WTC11 (cell line): ENCODE measurements at regions of chr22 and their contacts with region 1.

Region 1: DNA sequence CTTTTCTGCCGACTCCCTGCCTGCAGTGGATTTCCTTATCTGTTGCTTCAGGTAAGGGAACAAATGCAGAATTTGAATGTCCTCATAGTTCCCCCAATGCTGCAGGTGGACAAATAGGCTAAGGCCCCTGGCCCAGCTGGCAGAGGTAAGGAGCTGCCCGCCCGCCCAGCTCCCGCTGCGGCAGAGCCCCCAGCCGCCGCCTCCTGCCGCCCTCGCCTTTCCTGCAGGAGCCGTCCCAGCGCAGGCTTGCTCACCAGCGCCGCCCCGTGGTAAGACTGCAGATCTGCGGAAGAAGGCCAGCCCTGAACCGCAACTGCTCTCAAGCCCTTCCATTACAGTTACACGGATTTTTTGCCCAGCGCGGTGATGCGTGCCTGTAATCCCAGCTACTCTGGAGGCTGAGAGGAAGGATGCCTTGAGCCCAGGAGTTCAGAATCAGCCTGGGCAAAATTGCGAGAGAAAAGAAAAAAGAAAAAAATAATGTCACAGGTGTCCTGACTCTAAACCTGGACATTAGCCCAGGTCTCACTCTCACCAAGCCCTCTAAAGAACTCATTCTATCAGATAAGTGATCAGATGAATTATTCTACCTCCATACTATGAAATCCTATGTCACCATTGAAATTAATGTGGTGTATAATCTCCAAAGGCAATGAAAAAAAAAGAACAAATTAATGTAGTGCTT is 51.2 kb upstream of the EMID1 start:
- DNase-seq: peak; percentile 89
- ATAC-seq: peak; percentile 58
- H3K4me3 Mint-ChIP-seq: no peak overlapping the region
- H3K27ac Mint-ChIP-seq: no peak overlapping the region
- H3K4me1 Mint-ChIP-seq: peaks cover 49% of the 10 kb centered on the region
- H3K27me3 Mint-ChIP-seq: 0 out of 2 replicates have a peak, but pooled peaks cover 2% of the 10 kb centered on the region
- CTCF ChIP-seq: peak; percentile 97

Region 2: DNA sequence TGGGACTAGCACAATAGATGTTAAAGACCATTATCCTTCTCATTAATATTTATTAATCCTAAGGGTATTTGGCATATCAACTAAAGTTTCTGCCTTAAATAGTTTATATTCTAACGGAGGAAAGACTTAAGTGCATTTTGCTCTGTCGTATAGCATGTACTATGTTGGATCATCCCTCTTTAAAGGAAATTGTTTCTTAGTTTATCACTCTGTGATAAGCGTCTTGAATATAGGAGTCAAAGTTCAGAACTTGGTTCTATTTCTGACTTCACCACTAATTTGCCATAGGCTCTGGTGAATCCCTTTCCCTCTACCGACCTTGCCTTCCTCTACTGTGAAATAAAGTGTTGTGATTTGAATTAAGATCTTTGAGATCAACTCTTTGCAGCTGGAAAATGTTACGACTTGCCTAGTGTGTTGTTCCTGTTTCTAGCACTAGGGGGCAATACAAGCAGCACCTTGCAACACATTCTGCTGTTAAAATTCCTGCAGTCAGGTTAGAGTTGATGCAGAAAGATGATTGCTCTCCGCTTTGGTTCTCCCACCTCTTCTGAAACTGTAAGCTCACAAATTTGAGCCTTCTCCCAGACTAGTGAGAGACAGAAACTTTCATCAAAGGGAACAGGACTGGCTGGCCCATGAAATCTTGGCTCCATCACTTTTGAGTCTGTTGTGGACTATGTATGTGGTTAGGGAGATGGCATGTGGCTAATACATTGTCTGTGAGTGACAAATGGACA is 299.0 kb before region 1 on chr22:
- CTCF ChIA-PET with region 1: interaction called, 10 read pairs
- POLR2A ChIA-PET with region 1: no interaction called
- DNase-seq: peak; percentile 51
- ATAC-seq: peak; percentile 73
- H3K4me3 Mint-ChIP-seq: no peak overlapping the region
- H3K27ac Mint-ChIP-seq: no peak overlapping the region
- H3K4me1 Mint-ChIP-seq: 0 out of 2 replicates have a peak, but pooled peaks cover 3% of the 10 kb centered on the region
- H3K27me3 Mint-ChIP-seq: no peaks in the 10 kb centered on the region
- CTCF ChIP-seq: peak; percentile 72

Region 3: DNA sequence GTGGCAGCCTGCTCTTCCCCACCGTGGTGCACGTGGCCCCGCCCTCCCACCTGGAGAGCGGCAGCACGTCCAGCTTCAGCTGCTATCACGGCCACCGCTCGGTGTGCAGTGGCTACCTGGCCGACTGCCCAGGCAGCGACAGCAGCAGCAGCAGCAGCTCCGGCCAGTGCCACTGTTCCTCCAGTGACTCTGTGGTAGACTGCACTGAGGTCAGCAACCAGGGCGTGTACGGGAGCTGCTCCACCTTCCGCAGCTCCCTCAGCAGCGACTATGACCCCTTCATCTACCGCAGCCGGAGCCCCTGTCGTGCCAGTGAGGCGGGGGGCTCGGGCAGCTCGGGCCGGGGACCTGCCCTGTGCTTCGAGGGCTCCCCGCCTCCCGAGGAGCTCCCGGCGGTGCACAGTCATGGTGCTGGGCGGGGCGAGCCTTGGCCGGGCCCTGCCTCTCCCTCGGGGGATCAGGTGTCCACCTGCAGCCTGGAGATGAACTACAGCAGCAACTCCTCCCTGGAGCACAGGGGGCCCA is 104.8 kb before region 1 on chr22:
- CTCF ChIA-PET with region 1: interaction called, 40 read pairs
- POLR2A ChIA-PET with region 1: no interaction called
- DNase-seq: no peak
- ATAC-seq: no peak
- H3K4me3 Mint-ChIP-seq: no peak overlapping the region
- H3K27ac Mint-ChIP-seq: peak overlapping the region; percentile 90
- H3K4me1 Mint-ChIP-seq: peaks cover 20% of the 10 kb centered on the region
- H3K27me3 Mint-ChIP-seq: no peaks in the 10 kb centered on the region
- CTCF ChIP-seq: no peak

Region 4: GRCh38 chr22:29072193-29072978 is 82.1 kb before region 1 on chr22:
- CTCF ChIA-PET with region 1: interaction called, 21 read pairs
- POLR2A ChIA-PET with region 1: no interaction called
- DNase-seq: peak; percentile 99
- ATAC-seq: peak; percentile 90
- H3K4me3 Mint-ChIP-seq: peak overlapping the region; percentile 65
- H3K27ac Mint-ChIP-seq: no peak overlapping the region
- H3K4me1 Mint-ChIP-seq: peaks cover 20% of the 10 kb centered on the region
- H3K27me3 Mint-ChIP-seq: peaks cover 65% of the 10 kb centered on the region
- CTCF ChIP-seq: no peak

Region 5: GRCh38 chr22:29102300-29102699 is 52.2 kb before region 1 on chr22:
- CTCF ChIA-PET with region 1: interaction called, 12 read pairs
- POLR2A ChIA-PET with region 1: no interaction called
- DNase-seq: no peak
- ATAC-seq: no peak
- H3K4me3 Mint-ChIP-seq: no peak overlapping the region
- H3K27ac Mint-ChIP-seq: no peak overlapping the region
- H3K4me1 Mint-ChIP-seq: peaks cover 18% of the 10 kb centered on the region
- H3K27me3 Mint-ChIP-seq: no peaks in the 10 kb centered on the region
- CTCF ChIP-seq: no peak

Region 6: GRCh38 chr22:29143941-29144785 is 10.3 kb before region 1 on chr22:
- CTCF ChIA-PET with region 1: interaction called, 66 read pairs
- POLR2A ChIA-PET with region 1: no interaction called
- DNase-seq: no peak
- ATAC-seq: no peak
- H3K4me3 Mint-ChIP-seq: no peak overlapping the region
- H3K27ac Mint-ChIP-seq: peak overlapping the region; percentile 65; the same call in 1 of the 2 replicates
- H3K4me1 Mint-ChIP-seq: peaks cover 31% of the 10 kb centered on the region
- H3K27me3 Mint-ChIP-seq: no peaks in the 10 kb centered on the region
- CTCF ChIP-seq: no peak

Region 7: GRCh38 chr22:29202212-29203192 is 48.0 kb after region 1 on chr22:
- CTCF ChIA-PET with region 1: interaction called, 34 read pairs
- POLR2A ChIA-PET with region 1: no interaction called
- DNase-seq: peak; percentile 59
- ATAC-seq: peak; percentile 49
- H3K4me3 Mint-ChIP-seq: no peak overlapping the region
- H3K27ac Mint-ChIP-seq: no peak overlapping the region
- H3K4me1 Mint-ChIP-seq: peaks cover 13% of the 10 kb centered on the region
- H3K27me3 Mint-ChIP-seq: peaks cover 9% of the 10 kb centered on the region
- CTCF ChIP-seq: no peak